Posterior vena cava (tissue), 2 donors: ENCODE measurements at regions of chr4 and their contacts with region 1.

Region 1: DNA sequence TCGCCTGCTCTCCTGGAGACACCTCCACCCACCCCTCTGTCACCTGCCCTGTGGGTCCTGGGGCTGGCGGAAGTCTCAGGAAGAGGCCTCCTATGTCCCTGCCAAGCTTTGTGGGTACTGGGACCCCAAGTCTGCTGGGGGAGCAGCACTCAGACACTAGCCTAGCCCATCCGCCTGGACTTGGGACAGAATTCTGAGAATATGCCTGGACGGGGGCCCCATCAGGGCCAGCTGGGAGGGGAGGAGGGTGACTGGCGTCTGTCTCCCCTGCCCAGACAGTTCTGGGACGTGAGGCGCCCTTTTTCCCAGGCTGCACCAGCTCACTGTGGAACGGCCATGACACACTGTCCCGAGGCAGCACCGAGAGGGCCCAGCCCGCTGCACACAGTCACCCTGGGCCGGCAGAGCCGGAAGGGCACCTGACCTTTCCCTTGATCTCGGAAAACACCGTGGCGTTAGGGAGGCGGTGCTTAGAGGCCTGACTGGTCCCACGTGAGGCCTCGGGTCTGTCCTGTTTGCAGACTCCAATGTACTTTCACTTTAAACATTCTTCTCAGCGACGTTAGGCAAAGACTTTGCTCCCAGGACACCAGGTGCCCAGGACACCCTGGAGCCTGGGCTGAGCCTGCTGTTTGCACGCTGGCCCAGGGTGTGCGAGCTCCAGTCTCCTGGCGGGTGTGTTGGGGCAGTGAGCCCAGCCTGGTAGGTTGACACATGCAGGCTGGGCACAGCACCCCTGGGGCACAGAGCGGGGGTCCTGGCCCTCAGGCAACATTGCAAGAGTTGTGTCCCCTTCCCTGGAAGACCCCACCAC is 700 bp downstream of the SLC26A1 start:
- DNase-seq: no peak

Region 2: DNA sequence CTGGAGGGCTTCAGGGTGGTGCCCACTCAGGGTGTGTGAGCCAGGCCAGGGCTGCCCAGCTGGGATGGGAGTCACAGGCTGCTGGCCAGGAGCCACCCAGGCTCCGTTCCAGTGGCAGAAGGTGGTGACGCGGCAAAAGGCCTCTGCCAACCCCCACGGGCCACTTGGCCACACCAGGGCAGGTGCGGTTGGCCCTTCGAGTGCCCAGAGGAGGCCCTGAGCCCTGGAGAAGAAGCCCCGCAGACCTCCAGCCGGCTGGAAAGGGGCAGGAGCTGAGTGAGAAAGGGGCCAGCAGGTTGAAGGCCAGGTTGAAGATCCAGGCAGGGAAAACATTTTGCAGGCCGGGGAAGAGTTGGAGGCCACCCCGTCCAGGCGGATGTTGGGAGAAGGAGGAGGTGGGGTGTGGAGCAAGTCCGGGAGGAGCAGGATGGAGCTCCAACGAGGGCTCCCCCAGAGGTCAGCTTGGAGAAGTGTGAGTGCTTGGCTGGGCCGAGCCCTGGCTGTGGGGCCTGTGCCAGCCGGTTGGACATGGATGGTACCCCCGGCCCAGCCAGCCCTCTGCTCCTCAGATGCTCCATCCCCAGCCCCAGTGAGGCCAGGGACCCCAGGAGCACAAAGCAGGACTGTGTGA is 163.7 kb before region 1 on chr4:
- intact Hi-C with region 1: no loop called
- DNase-seq: peak; percentile 74

Region 3: GRCh38 chr4:1027915-1028238 is 35.4 kb after region 1 on chr4:
- intact Hi-C with region 1: loop called in 1 of 2 experiments (anchors 1 kb)
- DNase-seq: no peak